Heart right ventricle (tissue), 16 donors: ENCODE measurements at regions of chr2 and their contacts with region 1.

Region 1: GRCh38 chr2:47088668-47089462 is 66.2 kb downstream of the STPG4 start:
- DNase-seq: peak in 1 of 2 donors; percentile 75
- ATAC-seq: peak; percentile 74 to 87 (median 82)
- H3K4me3 ChIP-seq: no peak overlapping the region
- H3K27ac ChIP-seq: peak overlapping the region in 8 of 10 donors; percentile 51 to 78 (median 67)
- H3K4me1 ChIP-seq: peaks cover 19 to 73% (median 60%) of the 10 kb centered on the region in 9 donors
- H3K27me3 ChIP-seq: no peaks in the 10 kb centered on the region
- CTCF ChIP-seq: no peak

Region 2: GRCh38 chr2:47008381-47009252 is 80.2 kb before region 1 on chr2:
- intact Hi-C with region 1: no loop called
- DNase-seq: peak; percentile 62 to 80
- ATAC-seq: peak; percentile 64 to 86 (median 75)
- H3K4me3 ChIP-seq: peak overlapping the region in 1 of 10 donors; percentile 13
- H3K27ac ChIP-seq: peak overlapping the region; percentile 36 to 89 (median 74)
- H3K4me1 ChIP-seq: peaks cover 27 to 74% (median 44%) of the 10 kb centered on the region in 9 donors
- H3K27me3 ChIP-seq: no peaks in the 10 kb centered on the region
- CTCF ChIP-seq: no peak

Region 3: DNA sequence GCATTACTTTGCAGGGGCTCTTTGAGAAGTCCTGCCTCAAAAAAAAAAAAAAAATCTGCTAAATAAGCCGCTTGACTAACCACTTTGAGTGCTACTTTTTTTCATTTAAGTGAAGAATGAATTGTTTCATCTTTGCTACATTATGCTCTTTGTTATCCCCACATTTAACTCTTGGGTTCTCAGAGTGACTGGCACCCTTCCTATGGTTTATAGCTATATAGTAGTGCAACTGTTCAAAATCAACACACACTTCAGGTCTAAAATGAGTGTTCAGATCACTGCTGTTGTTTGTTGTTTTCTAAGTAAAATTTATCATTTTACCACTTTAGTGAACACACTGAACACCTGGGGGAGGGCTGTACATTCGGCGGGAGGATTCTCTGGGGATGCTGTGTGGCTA is 52.7 kb after region 1 on chr2:
- intact Hi-C with region 1: loop called in 1 of 10 experiments (anchors 5 kb)
- DNase-seq: no peak
- ATAC-seq: no peak
- H3K4me3 ChIP-seq: no peak overlapping the region
- H3K27ac ChIP-seq: no peak overlapping the region
- H3K4me1 ChIP-seq: no peaks in the 10 kb centered on the region
- H3K27me3 ChIP-seq: no peaks in the 10 kb centered on the region
- CTCF ChIP-seq: no peak

Region 4: DNA sequence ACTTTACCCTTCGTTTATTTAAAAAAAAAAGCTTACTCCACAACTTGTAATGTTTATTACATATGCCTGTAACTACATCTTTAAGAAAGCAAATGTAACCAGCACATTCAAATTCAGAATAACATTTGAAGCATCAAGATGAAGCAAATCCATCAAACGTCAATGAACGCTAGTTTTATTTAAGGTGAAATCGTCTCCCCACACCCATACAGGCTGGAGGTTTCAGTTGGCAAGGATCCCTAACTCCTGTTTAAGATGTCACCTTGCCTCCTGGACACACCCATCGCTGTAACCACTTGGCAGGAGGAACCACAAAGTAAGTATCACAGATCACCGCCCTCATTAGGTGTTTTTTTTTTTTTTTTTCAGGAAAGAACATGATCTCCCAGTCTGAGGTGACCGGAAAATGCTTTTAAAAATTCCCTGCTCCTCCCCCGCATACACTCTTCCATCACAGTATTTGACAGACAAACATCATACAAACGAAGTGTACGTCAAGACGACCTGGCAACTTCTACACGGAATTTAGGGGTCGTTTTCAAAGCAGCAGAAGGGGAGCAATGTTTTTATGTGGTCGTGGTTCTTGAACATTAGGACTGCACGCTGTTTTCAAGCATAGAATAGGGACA is 86.0 kb after region 1 on chr2:
- intact Hi-C with region 1: loop called in 2 of 10 experiments (anchors 5 kb)
- DNase-seq: peak in 1 of 2 donors; percentile 55
- ATAC-seq: peak in 3 of 8 donors; percentile 13 to 33 (median 20)
- H3K4me3 ChIP-seq: peak overlapping the region; percentile 58 to 97 (median 89)
- H3K27ac ChIP-seq: peak overlapping the region; percentile 97 to 100 (median 99)
- H3K4me1 ChIP-seq: peaks cover 3 to 58% (median 50%) of the 10 kb centered on the region in 9 donors
- H3K27me3 ChIP-seq: no peaks in the 10 kb centered on the region
- CTCF ChIP-seq: no peak